Endothelial cell of umbilical vein (primary cell): ENCODE measurements at regions of chr11 and their contacts with region 1.

Region 1: DNA sequence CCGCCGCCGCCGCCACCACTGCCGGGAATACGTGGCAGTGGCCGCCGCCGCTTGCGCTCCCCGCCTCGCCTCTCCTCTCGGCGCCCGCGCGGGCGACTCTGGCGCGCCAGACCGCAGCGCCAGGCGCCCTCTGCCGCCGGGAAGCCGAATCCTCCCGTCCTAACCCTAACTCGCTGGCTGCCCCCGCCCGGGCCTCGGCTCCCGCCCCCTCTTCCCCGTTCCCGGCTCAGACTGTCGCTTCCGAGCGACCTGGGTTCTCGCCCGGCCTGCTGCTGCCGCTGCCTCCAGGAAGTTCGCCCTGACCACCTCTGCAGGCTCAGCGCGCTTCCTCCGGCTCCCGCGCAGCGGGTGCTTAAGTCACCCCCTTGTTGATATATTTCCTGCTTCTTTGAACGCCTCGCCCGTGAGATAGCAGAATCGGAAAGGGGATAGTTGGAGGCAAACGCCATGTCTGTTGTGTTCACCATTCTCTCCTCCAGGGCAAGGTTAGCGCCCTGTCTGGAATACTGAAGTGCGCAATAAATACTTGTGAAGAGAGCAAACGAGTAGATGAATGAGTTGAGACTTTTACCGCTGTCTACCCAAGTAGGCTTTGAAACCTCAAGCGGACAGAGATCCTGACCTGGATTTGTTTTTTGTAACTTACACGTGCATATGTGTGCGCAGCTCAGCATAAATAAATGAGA is at the start of gene SMCO4:
- DNase-seq: peak; percentile 76
- H3K4me3 ChIP-seq: peak within 1 kb of the TSS; percentile 68 to 74 (median 69)
- H3K27ac ChIP-seq: no peak within 1 kb of the TSS
- H3K4me1 ChIP-seq: peaks cover 13% of the 10 kb centered on the region
- H3K27me3 ChIP-seq: peaks cover 5 to 17% of the 10 kb centered on the region in 2 experiments
- CTCF ChIP-seq: peak; percentile 41 to 83
- POLR2A ChIP-seq: no peak
- total RNA-seq, gene SMCO4: 19.9 and 21.3 TPM in 2 replicates

Region 2: GRCh38 chr11:92941676-92942571 is 601.5 kb before region 1 on chr11:
- CTCF ChIA-PET with region 1: no interaction called
- POLR2A ChIA-PET with region 1: no interaction called
- dilution Hi-C with region 1: no loop called
- intact Hi-C with region 1: loop called (anchors 1 kb)
- DNase-seq: peak; percentile 35
- H3K4me3 ChIP-seq: no peak overlapping the region
- H3K27ac ChIP-seq: no peak overlapping the region
- H3K4me1 ChIP-seq: no peaks in the 10 kb centered on the region
- H3K27me3 ChIP-seq: no peaks in the 10 kb centered on the region
- CTCF ChIP-seq: peak; percentile 58 to 61
- POLR2A ChIP-seq: no peak

Region 3: DNA sequence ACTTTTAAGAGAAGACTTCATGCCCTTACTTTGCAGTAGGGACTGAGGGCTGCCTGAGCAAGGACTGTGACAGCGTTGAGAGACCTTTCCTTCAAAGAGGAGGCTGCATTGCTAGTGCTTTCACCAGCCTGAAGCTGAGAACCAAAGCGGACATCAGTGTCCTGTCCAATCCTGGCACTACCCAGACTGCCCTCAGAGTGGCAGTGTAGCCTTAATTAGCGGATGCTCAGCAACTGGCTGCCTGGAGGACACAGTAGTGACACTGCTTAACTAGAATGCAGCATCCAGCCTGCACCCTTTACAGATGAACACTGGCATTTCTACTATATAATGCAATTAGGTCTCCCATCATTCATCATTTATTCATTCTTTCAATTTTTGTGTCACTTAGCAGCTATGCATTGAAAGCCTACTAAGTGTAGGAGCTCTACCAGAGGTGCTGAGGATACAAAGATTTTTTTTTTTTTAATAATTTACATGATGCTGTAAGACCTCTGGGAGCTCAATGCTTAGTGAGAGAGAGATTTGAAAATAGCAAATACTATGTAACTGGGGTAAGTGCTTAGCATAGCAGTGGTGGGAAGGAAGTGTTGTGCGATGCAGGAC is 308.7 kb before region 1 on chr11:
- CTCF ChIA-PET with region 1: interaction called, 53 read pairs
- POLR2A ChIA-PET with region 1: interaction called, 3 read pairs
- dilution Hi-C with region 1: no loop called
- intact Hi-C with region 1: loop called (anchors 1 kb)
- DNase-seq: peak; percentile 77
- H3K4me3 ChIP-seq: no peak overlapping the region
- H3K27ac ChIP-seq: no peak overlapping the region
- H3K4me1 ChIP-seq: no peaks in the 10 kb centered on the region
- H3K27me3 ChIP-seq: peaks cover 4 to 7% of the 10 kb centered on the region in 2 experiments
- CTCF ChIP-seq: peak; percentile 74 to 85
- POLR2A ChIP-seq: no peak

Region 4: DNA sequence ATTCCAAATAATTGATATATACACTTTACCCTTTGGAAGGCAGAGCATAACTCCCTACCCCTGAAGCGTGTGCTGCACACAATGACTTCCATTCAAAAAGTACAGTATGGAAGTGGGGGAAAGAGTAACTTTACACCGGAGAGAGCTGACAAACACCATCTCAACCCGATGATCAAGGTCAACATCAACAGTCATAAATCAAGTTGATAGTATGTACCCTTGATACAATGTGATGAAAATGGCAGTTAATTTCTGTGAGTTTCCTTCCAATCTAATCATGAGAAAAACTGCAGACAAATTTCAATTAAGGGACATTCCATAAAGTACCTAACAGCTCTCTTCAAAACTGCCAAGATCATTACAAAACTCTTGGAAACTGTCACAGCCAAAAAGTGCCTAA is 218.9 kb before region 1 on chr11:
- CTCF ChIA-PET with region 1: no interaction called
- POLR2A ChIA-PET with region 1: no interaction called
- dilution Hi-C with region 1: no loop called
- intact Hi-C with region 1: no loop called
- DNase-seq: no peak
- H3K4me3 ChIP-seq: no peak overlapping the region
- H3K27ac ChIP-seq: no peak overlapping the region
- H3K4me1 ChIP-seq: no peaks in the 10 kb centered on the region
- H3K27me3 ChIP-seq: peaks cover 0 to 2% of the 10 kb centered on the region in 2 experiments
- CTCF ChIP-seq: no peak
- POLR2A ChIP-seq: no peak

Region 5: DNA sequence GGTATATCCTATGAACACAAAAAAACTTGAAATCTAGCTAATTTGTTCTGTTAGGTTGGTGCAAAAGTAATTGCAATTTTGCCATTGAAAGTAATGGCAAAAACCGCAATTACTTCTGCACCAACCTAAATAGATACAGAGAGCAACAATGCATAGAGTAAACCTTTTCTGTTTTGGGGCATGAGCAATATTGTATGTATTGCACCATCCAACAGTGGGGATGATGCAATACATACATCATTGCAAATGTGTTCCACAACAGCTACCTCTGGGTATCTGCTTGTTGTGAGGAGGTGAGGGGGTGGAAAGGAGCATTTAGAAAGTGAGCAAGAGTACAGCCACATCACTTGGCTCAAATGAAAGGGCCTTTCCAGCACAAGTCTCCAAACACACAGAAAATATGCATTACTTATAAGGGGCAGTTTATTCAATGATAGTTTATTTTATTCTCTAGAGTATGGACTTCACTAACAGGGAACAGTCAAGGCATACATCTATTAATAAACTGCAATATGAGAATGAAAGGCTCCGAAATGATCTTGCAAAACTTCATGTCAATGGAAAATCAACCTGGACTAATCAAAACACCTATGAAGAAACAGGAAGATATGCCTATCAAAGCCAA is 135.5 kb before region 1 on chr11:
- CTCF ChIA-PET with region 1: no interaction called
- POLR2A ChIA-PET with region 1: no interaction called
- dilution Hi-C with region 1: no loop called
- intact Hi-C with region 1: loop called (anchors 10 kb)
- DNase-seq: no peak
- H3K4me3 ChIP-seq: no peak overlapping the region
- H3K27ac ChIP-seq: no peak overlapping the region
- H3K4me1 ChIP-seq: no peaks in the 10 kb centered on the region
- H3K27me3 ChIP-seq: no peaks in the 10 kb centered on the region
- CTCF ChIP-seq: no peak
- POLR2A ChIP-seq: no peak

Region 6: DNA sequence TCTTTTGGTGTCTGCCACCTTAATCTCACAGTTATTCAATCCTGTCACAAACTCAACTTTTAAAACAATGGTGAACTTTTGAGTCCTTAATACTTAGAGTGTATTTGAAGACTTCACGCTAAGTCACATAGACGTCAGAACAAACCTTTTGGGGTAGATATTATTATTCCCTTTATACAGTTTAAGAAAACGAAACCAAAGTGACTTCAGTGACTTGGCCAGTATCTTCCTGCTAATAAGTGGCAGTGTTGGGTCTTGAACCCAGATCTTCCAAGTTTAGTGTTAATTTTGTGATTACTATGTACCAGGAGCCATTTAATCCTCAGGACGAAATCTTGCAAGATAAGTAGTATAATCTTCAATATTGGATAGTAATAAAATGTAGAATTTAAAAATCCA is 118.7 kb after region 1 on chr11:
- CTCF ChIA-PET with region 1: no interaction called
- POLR2A ChIA-PET with region 1: no interaction called
- dilution Hi-C with region 1: no loop called
- intact Hi-C with region 1: loop called (anchors 2 kb)
- DNase-seq: no peak
- H3K4me3 ChIP-seq: peak overlapping the region; percentile 29 to 100 (median 93)
- H3K27ac ChIP-seq: peak overlapping the region; percentile 37
- H3K4me1 ChIP-seq: peaks cover 9% of the 10 kb centered on the region
- H3K27me3 ChIP-seq: peaks cover 10 to 12% of the 10 kb centered on the region in 2 experiments
- CTCF ChIP-seq: no peak
- POLR2A ChIP-seq: no peak